H1 (cell line): ENCODE measurements at regions of chr20 and their contacts with region 1.

Region 1: GRCh38 chr20:32945710-32946221 is 58.5 kb downstream of the SUN5 start:
- DNase-seq: peak in 1 of 2 experiments; percentile 43
- H3K4me3 ChIP-seq: no peak overlapping the region
- H3K27ac ChIP-seq: no peak overlapping the region
- H3K4me1 ChIP-seq: no peaks in the 10 kb centered on the region
- H3K27me3 ChIP-seq: peaks cover 10 to 28% (median 20%) of the 10 kb centered on the region in 4 experiments
- CTCF ChIP-seq: peak in 2 of 3 experiments; percentile 61 to 68; a peak in 3 of 4 replicates
- EP300 ChIP-seq: no peak
- POLR2A ChIP-seq: no peak
- RAD21 ChIP-seq: peak; percentile 64 to 66

Region 2: DNA sequence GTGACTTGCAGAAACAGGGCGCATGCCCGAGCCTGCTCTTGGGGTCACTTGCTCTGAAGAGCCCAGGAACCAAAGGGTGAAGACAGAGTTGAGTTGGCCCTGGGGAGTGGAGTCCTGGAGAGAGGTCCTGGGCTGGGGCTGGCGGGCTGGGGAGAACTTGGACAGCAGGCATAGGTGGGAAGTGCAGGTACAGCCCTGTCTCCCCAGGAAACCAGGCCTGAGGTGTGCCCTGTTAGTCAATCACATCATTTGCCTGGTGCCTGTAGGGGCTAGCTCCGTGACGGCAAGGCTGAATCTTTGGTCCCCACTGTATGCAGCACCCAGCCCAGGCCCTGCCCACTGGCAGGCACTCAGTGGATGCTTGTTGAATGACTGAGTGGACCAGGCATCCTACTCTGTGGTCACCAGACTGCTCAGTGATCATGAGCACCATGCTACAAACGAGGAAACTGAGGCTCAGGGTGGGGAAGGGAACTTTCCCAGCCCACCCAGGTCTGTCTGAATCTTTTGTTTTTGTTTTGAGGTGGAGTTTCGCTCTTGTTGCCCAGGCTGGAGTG is 345.0 kb before region 1 on chr20:
- CTCF ChIA-PET with region 1: no interaction called
- POLR2A ChIA-PET with region 1: no interaction called
- DNase-seq: no peak
- H3K4me3 ChIP-seq: no peak overlapping the region
- H3K27ac ChIP-seq: no peak overlapping the region
- H3K4me1 ChIP-seq: peaks cover 0 to 5% (median 1%) of the 10 kb centered on the region in 4 experiments; a peak in 3 of 7 replicates
- H3K27me3 ChIP-seq: peaks cover 0 to under 1% (median 0%) of the 10 kb centered on the region in 4 experiments; a peak in 1 of 7 replicates
- CTCF ChIP-seq: no peak
- EP300 ChIP-seq: no peak
- POLR2A ChIP-seq: no peak
- RAD21 ChIP-seq: no peak

Region 3: GRCh38 chr20:32908334-32909292 is 37.2 kb before region 1 on chr20:
- CTCF ChIA-PET with region 1: interaction called, 26 read pairs
- POLR2A ChIA-PET with region 1: no interaction called
- DNase-seq: no peak
- H3K4me3 ChIP-seq: no peak overlapping the region
- H3K27ac ChIP-seq: no peak overlapping the region
- H3K4me1 ChIP-seq: no peaks in the 10 kb centered on the region
- H3K27me3 ChIP-seq: no peaks in the 10 kb centered on the region
- CTCF ChIP-seq: no peak
- EP300 ChIP-seq: no peak
- POLR2A ChIP-seq: no peak
- RAD21 ChIP-seq: no peak

Region 4: DNA sequence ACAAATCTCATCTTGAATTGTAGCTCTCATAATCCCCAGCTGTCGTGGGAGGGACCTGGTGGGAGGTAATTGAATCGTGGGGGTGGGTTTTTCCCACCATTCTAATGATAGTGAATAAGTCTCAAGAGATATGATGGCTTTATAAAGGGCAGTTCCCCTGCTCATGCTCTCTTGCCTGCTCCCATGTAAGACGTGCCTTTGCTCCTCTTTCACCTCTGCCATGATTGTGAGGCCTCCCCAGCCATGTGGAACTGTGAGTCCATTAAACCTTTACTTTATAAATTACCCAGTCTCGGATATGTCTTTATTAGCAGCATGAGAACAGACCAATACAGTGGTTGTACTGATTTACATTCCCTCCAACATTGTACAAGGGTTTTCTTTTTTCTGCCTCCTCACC is 11.2 kb before region 1 on chr20:
- CTCF ChIA-PET with region 1: interaction called, 15 read pairs
- POLR2A ChIA-PET with region 1: no interaction called
- DNase-seq: no peak
- H3K4me3 ChIP-seq: no peak overlapping the region
- H3K27ac ChIP-seq: no peak overlapping the region
- H3K4me1 ChIP-seq: no peaks in the 10 kb centered on the region
- H3K27me3 ChIP-seq: no peaks in the 10 kb centered on the region; a peak in 1 of 7 replicates
- CTCF ChIP-seq: no peak
- EP300 ChIP-seq: no peak
- POLR2A ChIP-seq: no peak
- RAD21 ChIP-seq: no peak

Region 5: GRCh38 chr20:32972181-32973076 is 26.7 kb after region 1 on chr20:
- CTCF ChIA-PET with region 1: interaction called, 12 read pairs
- POLR2A ChIA-PET with region 1: interaction called, 3 read pairs
- DNase-seq: peak in 1 of 2 experiments; percentile 46
- H3K4me3 ChIP-seq: no peak overlapping the region; a peak in 1 of 8 replicates
- H3K27ac ChIP-seq: no peak overlapping the region
- H3K4me1 ChIP-seq: peaks cover 10 to 25% (median 16%) of the 10 kb centered on the region in 4 experiments
- H3K27me3 ChIP-seq: no peaks in the 10 kb centered on the region
- CTCF ChIP-seq: no peak
- EP300 ChIP-seq: no peak
- POLR2A ChIP-seq: no peak
- RAD21 ChIP-seq: no peak

Region 6: DNA sequence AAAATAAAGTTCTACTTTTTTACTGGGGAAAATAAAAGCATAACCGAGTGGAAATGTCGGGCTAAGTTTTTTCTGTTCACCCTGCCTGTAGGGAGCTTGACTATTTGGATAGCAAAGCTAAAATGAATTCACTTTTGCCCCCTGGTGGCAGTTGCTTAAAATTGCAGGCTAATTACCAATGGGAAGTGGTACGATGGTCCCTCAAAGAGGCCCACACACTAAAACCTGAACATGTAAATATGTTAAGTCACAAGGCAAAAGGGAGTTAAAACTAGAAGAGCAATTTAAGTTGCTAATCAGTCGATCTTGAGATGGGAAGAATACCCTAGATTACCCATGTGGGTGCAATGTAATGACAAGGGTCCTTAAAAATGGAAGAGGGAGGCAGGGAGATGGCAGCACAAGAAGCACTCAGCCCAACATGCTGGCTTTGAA is 59.4 kb after region 1 on chr20:
- CTCF ChIA-PET with region 1: interaction called, 28 read pairs
- POLR2A ChIA-PET with region 1: no interaction called
- DNase-seq: no peak
- H3K4me3 ChIP-seq: no peak overlapping the region
- H3K27ac ChIP-seq: no peak overlapping the region
- H3K4me1 ChIP-seq: no peaks in the 10 kb centered on the region; a peak in 2 of 7 replicates
- H3K27me3 ChIP-seq: no peaks in the 10 kb centered on the region
- CTCF ChIP-seq: peak in 2 of 3 experiments; percentile 63 to 71; a peak in 3 of 4 replicates
- EP300 ChIP-seq: no peak
- POLR2A ChIP-seq: no peak
- RAD21 ChIP-seq: peak; percentile 60 to 64